ENCODE measurements at regions of chr7 and their contacts with region 1.

Region 1: DNA sequence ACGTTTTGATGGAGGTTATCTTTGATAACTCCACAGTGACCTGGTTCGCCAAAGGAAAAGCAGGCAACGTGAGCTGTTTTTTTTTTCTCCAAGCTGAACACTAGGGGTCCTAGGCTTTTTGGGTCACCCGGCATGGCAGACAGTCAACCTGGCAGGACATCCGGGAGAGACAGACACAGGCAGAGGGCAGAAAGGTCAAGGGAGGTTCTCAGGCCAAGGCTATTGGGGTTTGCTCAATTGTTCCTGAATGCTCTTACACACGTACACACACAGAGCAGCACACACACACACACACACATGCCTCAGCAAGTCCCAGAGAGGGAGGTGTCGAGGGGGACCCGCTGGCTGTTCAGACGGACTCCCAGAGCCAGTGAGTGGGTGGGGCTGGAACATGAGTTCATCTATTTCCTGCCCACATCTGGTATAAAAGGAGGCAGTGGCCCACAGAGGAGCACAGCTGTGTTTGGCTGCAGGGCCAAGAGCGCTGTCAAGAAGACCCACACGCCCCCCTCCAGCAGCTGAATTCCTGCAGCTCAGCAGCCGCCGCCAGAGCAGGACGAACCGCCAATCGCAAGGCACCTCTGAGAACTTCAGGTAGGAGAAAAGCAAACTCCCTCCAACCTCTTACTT is at the start of gene SERPINE1:
- DNase-seq: peak; percentile 95
- H3K4me3 ChIP-seq: peak within 1 kb of the TSS; percentile 63
- H3K27me3 ChIP-seq: no peaks in the 10 kb centered on the region
- CTCF ChIP-seq: peak; percentile 33
- polyA plus RNA-seq, gene SERPINE1: 1,118 and 1,433 TPM in 2 replicates

Region 2: GRCh38 chr7:100384628-100385294 is 742.0 kb before region 1 on chr7:
- CTCF ChIA-PET with region 1: no interaction called
- POLR2A ChIA-PET with region 1: no interaction called
- DNase-seq: no peak
- H3K4me3 ChIP-seq: no peak overlapping the region
- H3K27me3 ChIP-seq: peaks cover 9% of the 10 kb centered on the region
- CTCF ChIP-seq: no peak

Region 3: DNA sequence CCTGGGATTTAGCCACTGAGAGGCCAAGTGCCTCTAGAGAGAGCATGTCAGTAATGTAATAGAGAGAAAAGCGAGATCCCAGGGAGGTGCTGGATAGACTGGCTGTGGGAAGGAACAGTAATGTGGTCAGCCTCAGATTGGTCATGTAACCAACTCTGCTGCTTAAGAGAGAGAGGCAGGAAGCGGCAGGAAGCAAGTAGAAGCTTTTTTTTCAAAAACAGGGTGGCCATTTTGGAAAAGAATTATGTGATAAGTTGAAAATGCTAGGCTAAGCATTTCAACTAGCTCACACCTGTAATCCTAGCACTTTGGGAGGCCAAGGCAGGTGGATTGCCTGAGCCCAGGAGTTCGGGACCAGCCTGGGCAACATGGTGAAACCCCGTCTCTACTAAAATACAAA is 528.3 kb before region 1 on chr7:
- CTCF ChIA-PET with region 1: no interaction called
- POLR2A ChIA-PET with region 1: interaction called, 11 read pairs
- DNase-seq: no peak
- H3K4me3 ChIP-seq: no peak overlapping the region
- H3K27me3 ChIP-seq: no peaks in the 10 kb centered on the region
- CTCF ChIP-seq: no peak

Region 4: GRCh38 chr7:100965723-100966541 is 160.8 kb before region 1 on chr7:
- CTCF ChIA-PET with region 1: no interaction called
- POLR2A ChIA-PET with region 1: no interaction called
- DNase-seq: no peak
- H3K4me3 ChIP-seq: no peak overlapping the region
- H3K27me3 ChIP-seq: peaks cover 29% of the 10 kb centered on the region
- CTCF ChIP-seq: peak; percentile 76

Region 5: DNA sequence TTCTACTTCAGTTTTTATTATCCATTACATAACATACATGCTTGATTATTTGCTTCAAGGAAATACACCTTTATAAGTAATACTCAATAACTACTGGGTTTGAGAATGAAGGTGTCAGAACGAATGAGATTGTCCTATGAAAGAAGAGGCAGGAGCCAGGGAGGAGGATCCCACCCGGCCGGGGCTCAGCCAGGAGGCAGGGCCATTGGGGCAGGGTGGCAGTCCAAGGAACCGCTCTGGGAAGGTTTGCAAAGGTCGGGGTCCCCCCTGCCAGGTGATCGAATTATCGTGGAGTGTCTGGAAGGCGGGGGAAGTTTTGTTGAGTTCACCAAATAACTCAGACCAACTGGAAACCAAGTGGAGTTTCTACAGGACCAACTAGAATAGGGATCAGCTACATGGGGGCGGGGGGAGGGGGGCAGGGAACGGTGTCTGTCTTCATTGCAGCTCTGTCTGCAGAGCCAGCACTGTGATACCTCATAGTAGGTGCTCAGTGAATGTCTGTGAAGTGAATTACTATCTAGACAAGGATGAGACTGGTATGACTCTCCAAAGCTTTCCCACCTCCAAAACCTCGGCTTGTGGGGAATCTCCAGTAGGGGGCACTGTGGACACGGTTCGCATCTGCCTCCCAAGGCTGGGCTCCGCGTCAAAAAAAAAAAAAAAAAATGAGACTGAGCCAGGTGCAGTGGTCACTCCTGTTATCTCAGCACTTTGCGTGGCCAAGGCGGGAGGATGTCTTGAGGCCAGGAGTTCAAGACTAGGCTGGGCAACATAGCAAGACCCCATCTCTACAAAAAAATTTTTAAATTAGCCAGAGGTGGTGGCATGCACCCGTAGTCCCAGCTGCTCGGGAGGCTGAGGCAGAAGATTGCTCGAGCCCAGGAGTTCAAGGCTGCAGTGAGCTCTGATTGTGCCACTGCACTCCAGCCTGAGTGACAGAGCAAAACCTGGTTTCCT is 32.1 kb before region 1 on chr7:
- CTCF ChIA-PET with region 1: interaction called, 27 read pairs
- POLR2A ChIA-PET with region 1: no interaction called
- DNase-seq: no peak
- H3K4me3 ChIP-seq: no peak overlapping the region
- H3K27me3 ChIP-seq: no peaks in the 10 kb centered on the region
- CTCF ChIP-seq: peak; percentile 79

Region 6: GRCh38 chr7:101112233-101112632 is 14.5 kb before region 1 on chr7:
- CTCF ChIA-PET with region 1: interaction called, 3 read pairs
- POLR2A ChIA-PET with region 1: interaction called, 20 read pairs
- DNase-seq: no peak
- H3K4me3 ChIP-seq: no peak overlapping the region
- H3K27me3 ChIP-seq: no peaks in the 10 kb centered on the region
- CTCF ChIP-seq: no peak